BJ (cell line): ENCODE measurements at regions of chr7 and their contacts with region 1.

Region 1: GRCh38 chr7:80392229-80393169 is 119.4 kb downstream of the GNAT3 start:
- DNase-seq: no peak
- H3K4me3 ChIP-seq: no peak overlapping the region
- H3K27me3 ChIP-seq: no peaks in the 10 kb centered on the region
- CTCF ChIP-seq: peak; percentile 37; the same call in 1 of the 2 replicates

Region 2: GRCh38 chr7:80060218-80060806 is 332.2 kb before region 1 on chr7:
- CTCF ChIA-PET with region 1: interaction called, 26 read pairs
- POLR2A ChIA-PET with region 1: no interaction called
- DNase-seq: peak; percentile 50
- H3K4me3 ChIP-seq: no peak overlapping the region
- H3K27me3 ChIP-seq: no peaks in the 10 kb centered on the region
- CTCF ChIP-seq: peak; percentile 39; the same call in 1 of the 2 replicates

Region 3: GRCh38 chr7:80095545-80095944 is 297.0 kb before region 1 on chr7:
- CTCF ChIA-PET with region 1: interaction called, 35 read pairs
- POLR2A ChIA-PET with region 1: no interaction called
- DNase-seq: no peak
- H3K4me3 ChIP-seq: no peak overlapping the region
- H3K27me3 ChIP-seq: no peaks in the 10 kb centered on the region
- CTCF ChIP-seq: peak; percentile 34; the same call in 1 of the 2 replicates

Region 4: DNA sequence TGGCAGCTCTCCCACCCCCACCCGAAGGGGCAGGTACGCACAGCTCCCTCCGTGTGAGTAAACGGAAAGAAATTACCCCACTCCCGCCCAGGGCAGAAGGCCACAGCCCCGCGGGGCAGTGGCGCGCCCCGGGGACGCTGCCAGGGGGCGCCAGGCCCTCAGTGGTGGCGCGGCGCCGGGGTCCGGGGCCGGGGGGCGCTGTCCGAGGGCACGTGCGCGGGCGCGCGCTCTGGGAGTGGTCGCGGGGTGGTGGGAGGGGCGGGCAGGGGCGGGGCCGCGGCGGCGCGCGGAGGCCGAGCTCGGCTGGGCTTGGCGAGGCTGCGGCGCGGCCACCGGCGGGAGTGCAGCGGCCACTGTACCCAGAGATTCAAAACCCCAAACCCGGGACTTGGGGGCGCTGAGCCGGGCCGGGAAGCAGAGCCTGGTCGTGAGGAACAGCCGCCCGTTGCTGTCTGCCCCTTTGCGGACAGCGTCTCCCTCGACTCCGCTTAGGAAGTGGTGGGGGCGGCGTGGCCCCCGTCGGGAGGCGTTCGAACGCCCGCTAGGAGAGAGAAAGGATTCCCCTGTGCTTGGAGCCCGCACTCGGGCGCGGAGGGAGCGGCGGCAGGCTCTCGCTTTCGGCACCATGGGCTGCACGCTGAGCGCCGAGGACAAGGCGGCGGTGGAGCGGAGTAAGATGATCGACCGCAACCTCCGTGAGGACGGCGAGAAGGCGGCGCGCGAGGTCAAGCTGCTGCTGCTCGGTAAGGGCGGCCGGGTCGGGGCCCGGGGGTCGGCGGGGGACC is 257.8 kb before region 1 on chr7 and contains the start of gene GNAI1:
- CTCF ChIA-PET with region 1: interaction called, 15 read pairs
- POLR2A ChIA-PET with region 1: no interaction called
- DNase-seq: no peak
- H3K4me3 ChIP-seq: peak within 1 kb of the TSS; percentile 95
- H3K27me3 ChIP-seq: no peaks in the 10 kb centered on the region
- CTCF ChIP-seq: peak; percentile 44
- polyA plus RNA-seq, gene GNAI1: 19.4 and 51.6 TPM in 2 replicates